Left cardiac atrium (tissue), 4 donors: ENCODE measurements at regions of chr1 and their contacts with region 1.

Region 1: GRCh38 chr1:183777328-183777727 is 27.6 kb upstream of the RGL1 start:
- DNase-seq: no peak
- ATAC-seq: no peak

Region 2: GRCh38 chr1:183720028-183720427 is 57.3 kb before region 1 on chr1:
- intact Hi-C with region 1: loop called in 1 of 2 experiments (anchors 10 kb)
- DNase-seq: no peak
- ATAC-seq: peak in 1 of 2 donors; percentile 74